Naive thymus-derived CD4-positive, alpha-beta T cell (primary cell): ENCODE measurements at regions of chr10 and their contacts with region 1.

Region 1: DNA sequence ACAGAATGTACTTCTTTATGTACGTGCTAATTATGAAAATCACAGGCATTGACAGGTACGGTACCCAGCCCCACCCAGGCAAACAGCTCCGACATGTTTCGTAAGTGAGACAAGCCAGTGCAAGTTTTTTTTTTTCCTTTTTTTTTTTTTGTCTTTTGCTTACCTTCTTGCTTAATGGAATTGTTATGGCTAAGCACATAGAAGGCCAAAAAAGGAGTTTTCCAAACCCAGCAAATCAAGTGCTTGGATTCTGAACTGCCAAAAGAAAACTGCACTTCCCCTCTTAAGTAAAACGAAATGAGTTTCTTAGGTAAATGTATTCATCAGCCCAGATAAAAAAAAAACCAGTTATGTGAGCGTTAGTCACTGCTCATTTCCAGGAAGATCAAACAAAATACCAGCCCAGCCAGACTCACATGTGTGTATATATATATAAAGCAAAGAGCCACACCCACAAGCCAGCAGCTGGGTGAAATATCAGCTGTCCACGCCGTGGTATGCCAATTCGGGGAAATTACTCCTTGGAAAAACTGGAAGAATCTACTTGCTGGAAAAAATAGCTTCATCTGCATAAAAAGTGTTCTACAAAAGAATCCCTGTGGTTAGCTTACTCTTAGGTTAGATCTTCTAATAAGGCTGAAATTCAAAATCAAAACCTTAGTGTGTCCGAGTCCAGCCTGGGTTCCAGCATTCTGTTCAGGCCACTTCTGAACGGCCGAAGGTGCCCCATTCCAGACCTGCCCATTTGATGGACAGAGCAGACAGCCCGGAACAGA is 8.0 kb downstream of the KLF6 start:
- DNase-seq: peak in 7 of 9 donors; percentile 41 to 84 (median 67)
- ATAC-seq: peak; percentile 31
- H3K4me3 ChIP-seq: no peak overlapping the region
- H3K4me3 Mint-ChIP-seq: peak overlapping the region in 9 of 10 donors; percentile 7 to 81 (median 51)
- H3K27ac ChIP-seq: peak overlapping the region; percentile 70
- H3K27ac Mint-ChIP-seq: peak overlapping the region; percentile 59 to 99 (median 83)
- H3K4me1 ChIP-seq: peaks cover 53 to 71% of the 10 kb centered on the region in 2 donors
- H3K4me1 Mint-ChIP-seq: peaks cover 50 to 66% (median 64%) of the 10 kb centered on the region in 7 donors
- H3K27me3 ChIP-seq: no peaks in the 10 kb centered on the region
- H3K27me3 Mint-ChIP-seq: no peaks in the 10 kb centered on the region

Region 2: GRCh38 chr10:3239066-3239919 is 537.7 kb before region 1 on chr10:
- CTCF ChIA-PET with region 1: no interaction called
- POLR2A ChIA-PET with region 1: no interaction called
- intact Hi-C with region 1: loop called in 1 of 2 experiments (anchors 5 kb)
- DNase-seq: peak; percentile 23 to 72 (median 53)
- ATAC-seq: peak; percentile 78
- H3K4me3 ChIP-seq: no peak overlapping the region
- H3K4me3 Mint-ChIP-seq: peak overlapping the region in 2 of 10 donors; percentile 24 to 32
- H3K27ac ChIP-seq: no peak overlapping the region
- H3K27ac Mint-ChIP-seq: no peak overlapping the region
- H3K4me1 ChIP-seq: no peaks in the 10 kb centered on the region
- H3K4me1 Mint-ChIP-seq: peaks cover 0 to 8% (median 4%) of the 10 kb centered on the region in 7 donors
- H3K27me3 ChIP-seq: no peaks in the 10 kb centered on the region
- H3K27me3 Mint-ChIP-seq: peaks cover 0 to 33% (median 10%) of the 10 kb centered on the region in 5 donors

Region 3: GRCh38 chr10:3574451-3574850 is 202.5 kb before region 1 on chr10:
- CTCF ChIA-PET with region 1: no interaction called
- POLR2A ChIA-PET with region 1: no interaction called
- intact Hi-C with region 1: no loop called
- DNase-seq: no peak
- ATAC-seq: no peak
- H3K4me3 ChIP-seq: no peak overlapping the region
- H3K4me3 Mint-ChIP-seq: no peak overlapping the region
- H3K27ac ChIP-seq: no peak overlapping the region
- H3K27ac Mint-ChIP-seq: no peak overlapping the region
- H3K4me1 ChIP-seq: no peaks in the 10 kb centered on the region
- H3K4me1 Mint-ChIP-seq: peaks cover under 1 to 7% (median 4%) of the 10 kb centered on the region in 7 donors
- H3K27me3 ChIP-seq: no peaks in the 10 kb centered on the region
- H3K27me3 Mint-ChIP-seq: peaks cover 0 to 26% (median 0%) of the 10 kb centered on the region in 5 donors

Region 4: GRCh38 chr10:3623746-3624145 is 153.2 kb before region 1 on chr10:
- CTCF ChIA-PET with region 1: no interaction called
- POLR2A ChIA-PET with region 1: no interaction called
- intact Hi-C with region 1: loop called in 1 of 2 experiments (anchors 1 kb)
- DNase-seq: no peak
- ATAC-seq: no peak
- H3K4me3 ChIP-seq: no peak overlapping the region
- H3K4me3 Mint-ChIP-seq: no peak overlapping the region
- H3K27ac ChIP-seq: no peak overlapping the region
- H3K27ac Mint-ChIP-seq: no peak overlapping the region
- H3K4me1 ChIP-seq: peaks cover 0 to 4% of the 10 kb centered on the region in 2 donors
- H3K4me1 Mint-ChIP-seq: peaks cover 0 to 21% (median 7%) of the 10 kb centered on the region in 7 donors
- H3K27me3 ChIP-seq: no peaks in the 10 kb centered on the region
- H3K27me3 Mint-ChIP-seq: peaks cover 0 to 16% (median 9%) of the 10 kb centered on the region in 5 donors

Region 5: DNA sequence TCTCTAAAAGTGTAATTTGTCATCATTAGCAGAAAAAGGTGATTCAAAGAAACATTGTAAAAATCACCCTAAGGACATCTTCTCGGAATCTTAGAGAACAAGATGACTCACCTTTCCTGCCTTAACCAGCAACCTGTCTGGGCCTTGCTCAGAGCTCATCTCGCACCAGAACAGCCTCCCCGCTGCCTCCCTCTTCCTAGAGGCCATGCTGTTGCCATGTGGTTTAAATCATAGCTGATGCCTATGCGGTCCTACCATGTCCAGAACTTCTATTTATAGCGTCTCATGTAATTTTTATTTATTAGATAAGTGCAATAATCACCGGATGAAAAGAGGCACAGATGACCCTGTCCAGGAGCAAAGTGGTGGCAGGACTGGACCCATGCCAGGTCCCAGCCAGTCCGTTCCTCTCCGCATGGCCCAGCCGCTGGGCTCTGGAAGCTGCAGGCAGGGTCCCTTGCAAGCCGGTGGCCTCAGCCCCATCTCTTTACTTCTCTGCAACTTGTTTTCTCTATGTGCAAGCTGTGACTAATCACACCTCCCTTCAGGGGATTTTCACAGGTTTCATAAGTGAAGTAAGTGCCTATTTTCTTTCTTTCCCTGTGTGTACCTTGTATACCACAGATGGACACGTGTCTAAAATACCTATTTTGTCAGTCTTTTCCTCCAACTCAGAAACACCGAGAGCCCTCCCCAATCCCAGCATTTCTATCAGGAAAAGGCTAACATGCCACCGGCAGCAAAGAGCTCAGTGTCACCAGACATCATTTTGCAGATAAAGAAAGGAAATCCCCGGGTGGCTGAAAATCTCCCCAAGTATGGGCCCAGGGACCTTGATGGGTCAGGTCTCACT is 19.1 kb before region 1 on chr10:
- CTCF ChIA-PET with region 1: interaction called, 3 read pairs
- POLR2A ChIA-PET with region 1: interaction called, 4 read pairs
- intact Hi-C with region 1: loop called in 1 of 2 experiments (anchors 1 kb)
- DNase-seq: peak in 1 of 9 donors; percentile 62
- ATAC-seq: peak; percentile 80
- H3K4me3 ChIP-seq: no peak overlapping the region
- H3K4me3 Mint-ChIP-seq: peak overlapping the region in 2 of 10 donors; percentile 56 to 82
- H3K27ac ChIP-seq: no peak overlapping the region
- H3K27ac Mint-ChIP-seq: peak overlapping the region in 4 of 9 donors; percentile 65 to 99 (median 83)
- H3K4me1 ChIP-seq: peaks cover 0 to 56% of the 10 kb centered on the region in 2 donors
- H3K4me1 Mint-ChIP-seq: peaks cover 5 to 79% (median 24%) of the 10 kb centered on the region in 7 donors
- H3K27me3 ChIP-seq: no peaks in the 10 kb centered on the region
- H3K27me3 Mint-ChIP-seq: no peaks in the 10 kb centered on the region

Region 6: GRCh38 chr10:4046030-4046429 is 269.0 kb after region 1 on chr10:
- CTCF ChIA-PET with region 1: no interaction called
- POLR2A ChIA-PET with region 1: no interaction called
- intact Hi-C with region 1: no loop called
- DNase-seq: no peak
- ATAC-seq: no peak
- H3K4me3 ChIP-seq: no peak overlapping the region
- H3K4me3 Mint-ChIP-seq: no peak overlapping the region
- H3K27ac ChIP-seq: no peak overlapping the region
- H3K27ac Mint-ChIP-seq: no peak overlapping the region
- H3K4me1 ChIP-seq: no peaks in the 10 kb centered on the region
- H3K4me1 Mint-ChIP-seq: peaks cover 0 to 2% (median 0%) of the 10 kb centered on the region in 7 donors
- H3K27me3 ChIP-seq: no peaks in the 10 kb centered on the region
- H3K27me3 Mint-ChIP-seq: peaks cover 0 to 10% (median 0%) of the 10 kb centered on the region in 5 donors

Region 7: GRCh38 chr10:4081685-4082111 is 304.7 kb after region 1 on chr10:
- CTCF ChIA-PET with region 1: no interaction called
- POLR2A ChIA-PET with region 1: no interaction called
- intact Hi-C with region 1: loop called in 1 of 2 experiments (anchors 5 kb)
- DNase-seq: no peak
- ATAC-seq: no peak
- H3K4me3 ChIP-seq: no peak overlapping the region
- H3K4me3 Mint-ChIP-seq: peak overlapping the region in 2 of 10 donors; percentile 1 to 3
- H3K27ac ChIP-seq: no peak overlapping the region
- H3K27ac Mint-ChIP-seq: peak overlapping the region in 7 of 9 donors; percentile 14 to 75 (median 52)
- H3K4me1 ChIP-seq: peaks cover 15 to 39% of the 10 kb centered on the region in 2 donors
- H3K4me1 Mint-ChIP-seq: peaks cover 21 to 47% (median 29%) of the 10 kb centered on the region in 7 donors
- H3K27me3 ChIP-seq: no peaks in the 10 kb centered on the region
- H3K27me3 Mint-ChIP-seq: no peaks in the 10 kb centered on the region